GM10248 (cell line): ENCODE measurements at regions of chr12 and their contacts with region 1.

Region 1: DNA sequence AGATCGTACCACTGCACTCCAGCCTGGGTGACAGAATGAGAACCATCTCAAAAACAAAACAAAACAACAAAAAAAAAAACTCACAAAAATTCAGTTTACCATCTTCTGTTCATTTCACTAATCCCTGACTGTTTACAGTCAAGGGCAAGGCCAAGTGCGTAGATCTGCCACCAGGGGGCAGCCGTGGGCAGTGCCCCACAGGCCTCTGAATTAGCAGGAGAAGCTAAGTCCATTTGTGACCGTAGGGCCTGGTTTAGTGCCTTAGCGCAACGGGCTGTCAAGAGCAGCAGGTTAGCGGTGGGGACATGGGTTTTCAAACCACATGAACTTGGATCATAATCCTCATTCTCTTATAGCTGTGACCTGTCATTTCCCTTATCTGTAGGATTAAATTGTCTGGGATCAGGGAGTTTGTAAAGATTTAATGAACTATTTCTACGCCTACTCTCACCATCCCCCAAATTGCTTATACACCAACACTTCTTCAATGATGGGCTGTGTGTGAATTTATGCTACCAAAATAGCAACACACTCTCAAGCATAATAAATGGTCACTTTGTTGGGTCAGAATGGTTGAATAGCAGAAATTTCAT is 49.0 kb downstream of the KCTD10 start:
- DNase-seq: peak; percentile 85
- CTCF ChIP-seq: peak; percentile 99

Region 2: DNA sequence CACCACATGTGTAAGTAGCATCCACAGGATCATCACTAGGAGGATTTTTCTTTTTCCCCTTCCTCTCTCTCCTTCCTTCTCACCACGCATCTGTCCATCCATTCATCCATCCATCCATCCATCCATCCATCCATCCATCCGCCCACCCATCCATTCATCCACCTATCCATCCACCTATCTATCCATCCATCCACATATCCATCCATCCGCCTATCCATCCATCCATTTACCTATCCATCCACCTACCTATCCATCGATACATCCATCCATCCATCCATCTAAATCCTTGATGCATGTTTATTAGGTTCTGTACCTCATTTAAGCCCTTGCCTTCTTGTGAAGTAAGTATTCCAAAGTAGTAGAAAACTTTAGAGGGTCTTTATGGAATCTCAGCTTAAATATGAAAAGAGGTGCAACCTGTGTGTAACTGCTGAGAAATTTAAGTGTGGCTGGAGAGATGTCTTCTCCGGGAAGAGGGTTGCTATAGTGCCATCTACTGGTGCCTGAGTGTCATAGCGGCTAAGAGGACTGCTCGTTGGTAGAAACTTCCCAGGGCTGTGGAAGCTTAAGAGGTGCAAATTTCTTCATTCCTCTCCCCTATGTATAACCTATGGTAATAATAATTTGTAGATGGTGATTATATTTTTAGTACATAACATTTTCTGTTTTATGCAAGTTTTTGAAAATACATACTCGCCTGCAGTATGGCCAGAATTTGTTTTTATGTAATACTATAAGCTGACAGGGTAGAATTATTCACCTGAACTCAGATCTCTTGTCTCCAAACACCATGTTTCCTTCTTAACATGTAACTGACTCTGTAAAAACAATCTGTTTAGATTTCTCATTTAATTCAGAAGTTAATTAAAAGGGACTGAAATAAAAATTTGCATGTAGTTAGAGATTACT is 34.4 kb before region 1 on chr12:
- CTCF ChIA-PET with region 1: interaction called, 14 read pairs
- POLR2A ChIA-PET with region 1: no interaction called
- DNase-seq: peak; percentile 79
- CTCF ChIP-seq: peak; percentile 91

Region 3: DNA sequence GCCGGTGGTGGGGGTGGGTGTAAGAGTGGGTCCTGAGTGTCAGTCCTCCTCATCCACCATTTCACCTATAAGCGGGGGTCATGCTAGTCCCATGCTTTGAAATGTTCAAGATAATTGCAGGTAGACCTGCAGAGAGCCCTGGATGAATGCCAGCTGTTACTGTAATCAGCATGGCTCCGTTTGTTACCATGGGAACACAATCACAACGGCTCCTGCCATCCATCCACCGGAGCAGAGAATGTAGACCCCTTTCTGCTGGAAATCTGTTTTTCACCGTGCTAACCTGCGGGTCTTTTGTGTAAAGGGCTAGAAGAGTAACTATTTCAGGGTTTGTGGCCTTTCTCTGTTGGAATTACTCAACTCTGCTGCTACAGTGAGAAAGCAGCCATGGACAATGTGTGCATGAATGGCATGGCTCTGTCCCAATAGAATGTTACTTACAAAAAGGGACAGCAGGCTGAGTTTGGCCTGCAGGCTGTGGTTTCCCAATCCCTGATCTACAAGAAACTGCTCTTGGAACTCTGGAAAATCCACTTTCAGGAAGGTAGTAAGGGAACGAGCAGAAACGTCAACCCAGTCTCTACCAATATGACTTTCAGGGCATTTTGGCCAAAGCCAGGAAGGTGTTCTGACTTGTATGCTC is 12.8 kb after region 1 on chr12:
- CTCF ChIA-PET with region 1: interaction called, 10 read pairs
- POLR2A ChIA-PET with region 1: no interaction called
- DNase-seq: no peak
- CTCF ChIP-seq: no peak

Region 4: GRCh38 chr12:109775172-109775881 is 347.2 kb after region 1 on chr12:
- CTCF ChIA-PET with region 1: interaction called, 20 read pairs
- POLR2A ChIA-PET with region 1: no interaction called
- DNase-seq: peak; percentile 75
- CTCF ChIP-seq: peak; percentile 86